ENCODE measurements at regions of chr10 and their contacts with region 1.

Region 1: DNA sequence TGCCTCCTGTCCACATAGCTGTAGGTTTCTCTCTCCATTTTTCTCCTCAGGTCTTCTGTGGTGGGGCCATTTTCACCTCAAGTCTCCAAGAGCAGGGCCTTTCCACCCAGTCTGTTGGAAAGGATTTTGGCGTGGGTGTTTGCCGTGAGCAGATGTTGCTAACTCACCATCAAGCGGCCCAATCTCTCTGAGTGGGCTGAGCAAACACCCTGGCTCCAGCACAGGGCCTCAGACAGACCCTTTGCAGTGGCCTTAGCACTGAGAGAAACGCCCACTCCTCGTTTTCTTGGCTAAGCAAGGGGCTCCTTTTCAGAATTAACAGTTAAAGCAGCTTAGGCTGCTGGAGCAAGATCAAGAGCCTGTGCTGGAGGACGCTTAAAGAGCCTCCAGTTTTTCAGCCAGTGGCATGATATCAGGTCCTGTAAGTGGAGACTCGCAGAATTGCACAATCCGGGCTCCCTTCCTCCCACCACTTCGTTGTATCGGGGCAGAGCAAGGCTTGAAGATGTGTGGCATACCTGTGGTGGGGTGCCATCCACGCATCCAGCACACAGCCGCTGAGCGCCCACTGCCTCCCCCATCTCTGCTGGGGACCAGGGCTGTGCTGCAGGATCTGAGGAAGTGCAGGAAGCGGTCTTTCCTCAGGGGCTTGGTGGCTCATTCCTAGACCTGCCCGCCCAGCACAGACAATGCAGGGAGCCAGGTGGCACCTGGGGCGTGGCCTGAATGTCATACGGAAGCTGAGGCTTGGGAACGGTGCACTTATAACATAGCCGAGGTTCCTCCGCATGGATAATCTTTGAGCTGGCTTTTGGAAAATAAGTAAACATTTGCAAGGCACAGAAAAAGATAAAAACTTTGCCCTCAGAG is 142.7 kb downstream of the ADARB2 start:
- DNase-seq: no peak
- ATAC-seq: no peak
- H3K4me3 Mint-ChIP-seq: no peak overlapping the region
- H3K27ac Mint-ChIP-seq: no peak overlapping the region
- H3K4me1 Mint-ChIP-seq: no peaks in the 10 kb centered on the region
- H3K27me3 Mint-ChIP-seq: no peaks in the 10 kb centered on the region

Region 2: GRCh38 chr10:1563028-1563427 is 31.6 kb before region 1 on chr10:
- CTCF ChIA-PET with region 1: no interaction called
- POLR2A ChIA-PET with region 1: interaction called, 12 read pairs
- intact Hi-C with region 1: no loop called
- DNase-seq: no peak
- ATAC-seq: no peak
- H3K4me3 Mint-ChIP-seq: no peak overlapping the region
- H3K27ac Mint-ChIP-seq: no peak overlapping the region
- H3K4me1 Mint-ChIP-seq: no peaks in the 10 kb centered on the region
- H3K27me3 Mint-ChIP-seq: peaks cover 12% of the 10 kb centered on the region

Region 3: GRCh38 chr10:1581189-1581588 is 13.4 kb before region 1 on chr10:
- CTCF ChIA-PET with region 1: no interaction called
- POLR2A ChIA-PET with region 1: no interaction called
- intact Hi-C with region 1: no loop called
- DNase-seq: no peak
- ATAC-seq: no peak
- H3K4me3 Mint-ChIP-seq: no peak overlapping the region
- H3K27ac Mint-ChIP-seq: no peak overlapping the region
- H3K4me1 Mint-ChIP-seq: no peaks in the 10 kb centered on the region
- H3K27me3 Mint-ChIP-seq: no peaks in the 10 kb centered on the region

Region 4: DNA sequence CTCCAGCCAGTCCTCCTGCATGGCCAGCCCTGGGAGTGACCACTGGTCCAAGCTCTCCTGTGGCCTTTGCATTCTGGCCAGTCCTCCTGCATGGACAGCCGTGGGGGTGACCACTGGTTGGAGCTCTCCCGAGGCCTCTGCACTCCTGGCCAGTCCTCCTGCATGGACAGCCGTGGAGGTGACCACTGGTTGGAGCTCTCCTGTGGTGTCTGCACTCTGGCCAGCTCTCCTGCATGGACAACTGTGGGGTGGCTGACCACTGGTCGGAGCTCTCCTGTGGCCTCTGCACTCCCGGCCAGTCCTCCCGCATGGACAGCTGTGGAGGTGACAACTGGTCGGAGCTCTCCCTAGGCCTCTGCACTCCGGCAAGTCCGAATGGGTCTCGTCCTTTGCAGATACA is 171.4 kb after region 1 on chr10:
- CTCF ChIA-PET with region 1: no interaction called
- POLR2A ChIA-PET with region 1: no interaction called
- intact Hi-C with region 1: no loop called
- DNase-seq: no peak
- ATAC-seq: no peak
- H3K4me3 Mint-ChIP-seq: no peak overlapping the region
- H3K27ac Mint-ChIP-seq: no peak overlapping the region
- H3K4me1 Mint-ChIP-seq: no peaks in the 10 kb centered on the region
- H3K27me3 Mint-ChIP-seq: no peaks in the 10 kb centered on the region